Ovary (tissue), 10 donors: ENCODE measurements at regions of chr3 and their contacts with region 1.

Region 1: DNA sequence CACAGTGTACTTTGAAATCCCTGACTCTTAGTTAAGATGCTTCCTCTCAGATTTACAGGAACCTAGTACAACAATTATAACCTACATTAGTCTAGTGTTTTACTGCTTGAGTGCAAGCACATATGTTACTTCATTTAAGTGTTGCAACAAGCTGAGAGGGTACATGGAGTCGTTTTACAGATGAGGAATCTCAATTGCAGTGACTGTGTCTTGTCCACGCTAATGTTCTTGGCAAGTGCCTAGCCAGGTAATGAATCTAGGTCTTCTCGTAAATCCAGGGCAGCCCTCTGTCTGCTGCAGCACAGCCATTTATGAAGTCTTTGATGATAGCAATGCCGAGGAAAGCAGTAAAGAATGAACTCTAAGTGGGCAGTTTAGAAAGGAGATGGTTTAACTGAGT is 384.4 kb upstream of the ARPP21 start:
- DNase-seq: no peak
- H3K4me3 ChIP-seq: no peak overlapping the region
- H3K27ac ChIP-seq: no peak overlapping the region
- H3K4me1 ChIP-seq: no peaks in the 10 kb centered on the region
- H3K27me3 ChIP-seq: no peaks in the 10 kb centered on the region
- CTCF ChIP-seq: no peak
- EP300 ChIP-seq: no peak
- POLR2A ChIP-seq: no peak

Region 2: GRCh38 chr3:35322070-35322469 is 67.2 kb after region 1 on chr3:
- intact Hi-C with region 1: loop called in 1 of 4 experiments (anchors 2 kb)
- DNase-seq: no peak
- H3K4me3 ChIP-seq: no peak overlapping the region
- H3K27ac ChIP-seq: no peak overlapping the region
- H3K4me1 ChIP-seq: no peaks in the 10 kb centered on the region
- H3K27me3 ChIP-seq: no peaks in the 10 kb centered on the region
- CTCF ChIP-seq: no peak
- EP300 ChIP-seq: no peak
- POLR2A ChIP-seq: no peak